H1 (cell line): ENCODE measurements at regions of chr16 and their contacts with region 1.

Region 1: GRCh38 chr16:22077700-22078313 is 14.5 kb upstream of the VWA3A start:
- DNase-seq: peak in 1 of 2 experiments; percentile 84
- H3K4me3 ChIP-seq: no peak overlapping the region
- H3K27ac ChIP-seq: no peak overlapping the region
- H3K4me1 ChIP-seq: no peaks in the 10 kb centered on the region
- H3K27me3 ChIP-seq: peaks cover 0 to 1% (median 0%) of the 10 kb centered on the region in 4 experiments; a peak in 1 of 7 replicates
- CTCF ChIP-seq: peak; percentile 55 to 79 (median 77)
- EP300 ChIP-seq: no peak
- POLR2A ChIP-seq: no peak
- RAD21 ChIP-seq: peak; percentile 81 to 82

Region 2: GRCh38 chr16:22007509-22008214 is 70.1 kb before region 1 on chr16 and contains the start of gene MOSMO:
- CTCF ChIA-PET with region 1: interaction called, 247 read pairs
- POLR2A ChIA-PET with region 1: interaction called, 8 read pairs
- DNase-seq: peak in 1 of 2 experiments; percentile 78
- H3K4me3 ChIP-seq: peak within 1 kb of the TSS; percentile 79 to 100 (median 88)
- H3K27ac ChIP-seq: no peak within 1 kb of the TSS; the same call in 1 of the 2 replicates
- H3K4me1 ChIP-seq: peaks cover 0 to 6% (median 1%) of the 10 kb centered on the region in 4 experiments; a peak in 1 of 7 replicates
- H3K27me3 ChIP-seq: 0 out of 7 replicates have a peak, but pooled peaks cover 0 to 2% (median under 1%) of the 10 kb centered on the region in 4 experiments
- CTCF ChIP-seq: no peak
- EP300 ChIP-seq: no peak
- POLR2A ChIP-seq: no peak
- RAD21 ChIP-seq: no peak
- total RNA-seq, gene MOSMO: 13.1 and 14.8 TPM in 2 replicates

Region 3: DNA sequence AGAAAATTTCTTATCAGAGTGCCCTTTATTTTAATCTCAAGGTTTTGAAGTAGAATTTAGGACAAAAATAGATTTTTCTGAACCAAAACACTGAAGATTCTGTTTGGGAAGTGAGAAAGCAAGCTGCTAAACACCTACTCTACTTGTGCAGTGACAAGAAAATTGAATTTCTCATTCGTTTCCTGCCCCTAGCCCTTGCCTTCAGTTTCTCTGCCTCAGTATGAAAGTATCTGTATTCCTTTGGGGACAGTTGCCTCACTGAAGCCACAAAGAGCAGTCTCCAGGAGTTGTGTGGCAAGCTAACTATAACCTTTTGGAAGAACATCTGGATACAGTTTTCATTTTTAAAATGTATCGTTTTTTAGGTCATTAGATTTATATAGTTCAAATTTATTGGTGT is 50.2 kb before region 1 on chr16:
- CTCF ChIA-PET with region 1: no interaction called
- POLR2A ChIA-PET with region 1: no interaction called
- DNase-seq: no peak
- H3K4me3 ChIP-seq: no peak overlapping the region
- H3K27ac ChIP-seq: no peak overlapping the region
- H3K4me1 ChIP-seq: no peaks in the 10 kb centered on the region
- H3K27me3 ChIP-seq: no peaks in the 10 kb centered on the region
- CTCF ChIP-seq: no peak
- EP300 ChIP-seq: no peak
- POLR2A ChIP-seq: no peak
- RAD21 ChIP-seq: no peak

Region 4: DNA sequence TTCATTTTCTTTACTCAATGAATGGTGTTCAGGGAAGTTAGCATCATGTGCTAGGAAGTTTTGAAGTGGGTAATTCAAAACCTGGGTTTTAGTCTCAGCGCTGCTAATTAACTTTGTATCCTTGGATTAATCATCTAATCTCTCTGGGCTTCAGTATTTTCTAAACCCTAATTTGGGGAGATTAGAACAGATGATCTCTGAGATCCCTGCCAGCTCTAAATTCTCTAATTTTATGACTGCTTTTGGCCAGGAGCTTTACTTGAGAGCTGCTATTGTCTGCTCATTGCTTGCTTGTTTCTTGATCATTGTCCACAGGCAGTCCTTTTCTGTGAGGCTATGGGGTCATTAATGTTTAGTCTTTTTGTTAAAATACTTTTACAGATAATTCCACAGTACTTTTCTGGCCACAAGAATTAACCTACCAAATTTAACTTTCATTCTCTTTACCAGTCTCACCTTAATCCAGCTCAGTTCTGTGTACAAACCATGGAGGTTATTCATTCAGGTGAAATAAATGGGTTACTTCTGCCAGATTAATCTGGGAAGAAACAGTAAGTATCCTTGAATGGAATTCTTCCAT is 13.8 kb before region 1 on chr16:
- CTCF ChIA-PET with region 1: interaction called, 51 read pairs
- POLR2A ChIA-PET with region 1: interaction called, 3 read pairs
- DNase-seq: no peak
- H3K4me3 ChIP-seq: no peak overlapping the region
- H3K27ac ChIP-seq: no peak overlapping the region
- H3K4me1 ChIP-seq: peaks cover 0 to 4% (median 0%) of the 10 kb centered on the region in 4 experiments; a peak in 1 of 7 replicates
- H3K27me3 ChIP-seq: no peaks in the 10 kb centered on the region
- CTCF ChIP-seq: no peak
- EP300 ChIP-seq: no peak
- POLR2A ChIP-seq: no peak
- RAD21 ChIP-seq: no peak

Region 5: GRCh38 chr16:22098405-22099255 is 20.8 kb after region 1 on chr16:
- CTCF ChIA-PET with region 1: interaction called, 63 read pairs
- POLR2A ChIA-PET with region 1: no interaction called
- DNase-seq: no peak
- H3K4me3 ChIP-seq: no peak overlapping the region
- H3K27ac ChIP-seq: no peak overlapping the region
- H3K4me1 ChIP-seq: peaks cover 2 to 7% (median 4%) of the 10 kb centered on the region in 4 experiments; a peak in 4 of 7 replicates
- H3K27me3 ChIP-seq: no peaks in the 10 kb centered on the region
- CTCF ChIP-seq: peak in 2 of 3 experiments; percentile 81 to 82; a peak in 3 of 4 replicates
- EP300 ChIP-seq: no peak
- POLR2A ChIP-seq: no peak
- RAD21 ChIP-seq: peak; percentile 77 to 80

Region 6: GRCh38 chr16:22141746-22142145 is 63.9 kb after region 1 on chr16:
- CTCF ChIA-PET with region 1: interaction called, 14 read pairs
- POLR2A ChIA-PET with region 1: interaction called, 3 read pairs
- DNase-seq: peak in 1 of 2 experiments; percentile 59
- H3K4me3 ChIP-seq: no peak overlapping the region
- H3K27ac ChIP-seq: no peak overlapping the region
- H3K4me1 ChIP-seq: no peaks in the 10 kb centered on the region
- H3K27me3 ChIP-seq: no peaks in the 10 kb centered on the region; a peak in 1 of 7 replicates
- CTCF ChIP-seq: peak; percentile 44 to 88 (median 65)
- EP300 ChIP-seq: no peak
- POLR2A ChIP-seq: no peak
- RAD21 ChIP-seq: peak; percentile 11 to 39; a peak in 3 of 4 replicates

Region 7: GRCh38 chr16:22321339-22322001 is 243.7 kb after region 1 on chr16:
- CTCF ChIA-PET with region 1: no interaction called
- POLR2A ChIA-PET with region 1: no interaction called
- DNase-seq: peak in 1 of 2 experiments; percentile 80
- H3K4me3 ChIP-seq: no peak overlapping the region
- H3K27ac ChIP-seq: peak overlapping the region; percentile 62
- H3K4me1 ChIP-seq: peaks cover 0 to 3% (median under 1%) of the 10 kb centered on the region in 4 experiments; a peak in 2 of 7 replicates
- H3K27me3 ChIP-seq: no peaks in the 10 kb centered on the region
- CTCF ChIP-seq: peak; percentile 86 to 97 (median 91)
- EP300 ChIP-seq: no peak
- POLR2A ChIP-seq: no peak
- RAD21 ChIP-seq: peak; percentile 90 to 95